HCT116 (cell line): ENCODE measurements at regions of chr7 and their contacts with region 1.

Region 1: GRCh38 chr7:85186521-85187241 is at the start of gene SEMA3D:
- DNase-seq: peak; percentile 48
- ATAC-seq: peak; percentile 97
- H3K4me3 ChIP-seq: peak within 1 kb of the TSS; percentile 62 to 66
- H3K27ac ChIP-seq: no peak within 1 kb of the TSS; the same call in 1 of the 2 replicates
- H3K4me1 ChIP-seq: peaks cover 5 to 8% of the 10 kb centered on the region in 2 experiments; a peak in 3 of 4 replicates
- H3K27me3 ChIP-seq: no peaks in the 10 kb centered on the region
- CTCF ChIP-seq: peak; percentile 44 to 93 (median 82); a peak in 5 of 6 replicates
- POLR2A ChIP-seq: no peak
- RAD21 ChIP-seq: peak; percentile 63
- total RNA-seq, gene SEMA3D: 1.4 TPM

Region 2: GRCh38 chr7:85464042-85464651 is 277.5 kb after region 1 on chr7:
- CTCF ChIA-PET with region 1: no interaction called
- POLR2A ChIA-PET with region 1: no interaction called
- RAD21 ChIA-PET with region 1: no interaction called
- intact Hi-C with region 1: loop called (anchors 10 kb)
- DNase-seq: no peak
- ATAC-seq: no peak
- H3K4me3 ChIP-seq: no peak overlapping the region
- H3K27ac ChIP-seq: no peak overlapping the region
- H3K4me1 ChIP-seq: no peaks in the 10 kb centered on the region
- H3K27me3 ChIP-seq: no peaks in the 10 kb centered on the region
- CTCF ChIP-seq: peak in 1 of 3 experiments; percentile 26; a peak in 2 of 6 replicates
- POLR2A ChIP-seq: no peak
- RAD21 ChIP-seq: no peak

Region 3: GRCh38 chr7:85750454-85750949 is 563.8 kb after region 1 on chr7:
- CTCF ChIA-PET with region 1: no interaction called
- POLR2A ChIA-PET with region 1: no interaction called
- RAD21 ChIA-PET with region 1: no interaction called
- intact Hi-C with region 1: loop called (anchors 5 kb)
- DNase-seq: peak; percentile 32
- ATAC-seq: peak; percentile 98
- H3K4me3 ChIP-seq: no peak overlapping the region
- H3K27ac ChIP-seq: no peak overlapping the region
- H3K4me1 ChIP-seq: 0 out of 4 replicates have a peak, but pooled peaks cover 0 to 4% of the 10 kb centered on the region in 2 experiments
- H3K27me3 ChIP-seq: no peaks in the 10 kb centered on the region
- CTCF ChIP-seq: peak; percentile 43 to 77 (median 76); a peak in 5 of 6 replicates
- POLR2A ChIP-seq: no peak
- RAD21 ChIP-seq: peak; percentile 69